Mammary epithelial cell (primary cell): ENCODE measurements at regions of chr3 and their contacts with region 1.

Region 1: GRCh38 chr3:64399205-64399800 is 174.0 kb upstream of the PRICKLE2 start:
- DNase-seq: peak; percentile 62
- H3K4me3 ChIP-seq: no peak overlapping the region
- H3K27ac ChIP-seq: no peak overlapping the region
- H3K4me1 ChIP-seq: no peaks in the 10 kb centered on the region
- H3K27me3 ChIP-seq: no peaks in the 10 kb centered on the region
- CTCF ChIP-seq: peak; percentile 82 to 90

Region 2: GRCh38 chr3:64023187-64023848 is 376.0 kb before region 1 on chr3 and contains the start of gene PSMD6:
- CTCF ChIA-PET with region 1: no interaction called
- dilution Hi-C with region 1: no loop called
- in situ Hi-C with region 1: no loop called
- intact Hi-C with region 1: loop called (anchors 2 kb)
- DNase-seq: peak; percentile 81
- H3K4me3 ChIP-seq: peak within 1 kb of the TSS; percentile 81 to 95 (median 85)
- H3K27ac ChIP-seq: peak within 1 kb of the TSS; percentile 90
- H3K4me1 ChIP-seq: peaks cover 10% of the 10 kb centered on the region
- H3K27me3 ChIP-seq: no peaks in the 10 kb centered on the region
- CTCF ChIP-seq: peak; percentile 96 to 100
- total RNA-seq, gene PSMD6: 70.7 to 85.9 TPM

Region 3: GRCh38 chr3:64224826-64225610 is 174.3 kb before region 1 on chr3 and contains the start of gene PRICKLE2:
- CTCF ChIA-PET with region 1: no interaction called
- dilution Hi-C with region 1: no loop called
- in situ Hi-C with region 1: no loop called
- intact Hi-C with region 1: loop called (anchors 1 kb)
- DNase-seq: peak; percentile 81
- H3K4me3 ChIP-seq: peak within 1 kb of the TSS in 2 of 3 experiments; percentile 7 to 25
- H3K27ac ChIP-seq: peak within 1 kb of the TSS; percentile 62
- H3K4me1 ChIP-seq: peaks cover 29% of the 10 kb centered on the region
- H3K27me3 ChIP-seq: no peaks in the 10 kb centered on the region
- CTCF ChIP-seq: peak; percentile 26 to 36
- total RNA-seq, gene PRICKLE2: 23.2 to 50.5 TPM

Region 4: GRCh38 chr3:64259636-64260035 is 139.7 kb before region 1 on chr3:
- CTCF ChIA-PET with region 1: no interaction called
- dilution Hi-C with region 1: no loop called
- in situ Hi-C with region 1: loop called in 1 of 2 experiments (anchors 10 kb)
- intact Hi-C with region 1: no loop called
- DNase-seq: no peak
- H3K4me3 ChIP-seq: no peak overlapping the region
- H3K27ac ChIP-seq: no peak overlapping the region
- H3K4me1 ChIP-seq: peaks cover 31% of the 10 kb centered on the region
- H3K27me3 ChIP-seq: no peaks in the 10 kb centered on the region
- CTCF ChIP-seq: no peak

Region 5: DNA sequence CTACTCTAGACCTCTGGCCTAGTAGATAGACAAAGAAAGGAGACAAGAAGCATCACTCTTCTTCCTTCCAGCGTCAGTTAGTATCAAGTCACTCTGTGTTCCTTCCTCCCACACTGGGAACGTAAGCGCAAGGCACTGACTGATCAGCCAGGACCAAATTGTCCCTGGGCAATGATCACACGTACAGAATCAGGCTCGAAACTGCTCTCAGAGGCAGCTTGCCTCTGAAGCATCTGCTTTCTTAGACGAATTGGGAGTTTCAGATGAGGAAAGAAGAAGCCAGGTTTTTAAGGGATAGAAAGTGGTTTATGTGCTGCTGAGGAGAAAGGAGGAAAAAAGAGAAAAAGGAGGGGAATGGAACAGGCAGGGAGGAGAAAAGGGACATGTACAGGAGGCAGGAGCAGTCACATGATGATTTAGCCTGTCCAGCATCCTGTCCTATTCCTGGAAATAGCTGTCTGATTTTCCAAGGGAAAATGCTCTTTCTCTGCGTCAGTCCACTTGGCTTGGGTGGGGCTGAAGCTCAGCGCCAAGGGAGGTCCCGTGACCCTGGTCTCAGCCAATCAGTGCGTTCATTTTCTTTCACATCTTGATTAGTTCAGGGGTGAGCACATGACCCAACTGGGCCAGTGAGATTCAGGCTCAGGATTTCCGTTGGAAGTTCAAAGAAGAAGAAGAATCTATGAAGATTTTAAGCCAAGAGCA is 72.1 kb before region 1 on chr3:
- CTCF ChIA-PET with region 1: no interaction called
- dilution Hi-C with region 1: loop called (anchors 5 kb)
- in situ Hi-C with region 1: no loop called
- intact Hi-C with region 1: loop called (anchors 1 kb)
- DNase-seq: no peak
- H3K4me3 ChIP-seq: no peak overlapping the region
- H3K27ac ChIP-seq: no peak overlapping the region
- H3K4me1 ChIP-seq: peaks cover 1% of the 10 kb centered on the region
- H3K27me3 ChIP-seq: no peaks in the 10 kb centered on the region
- CTCF ChIP-seq: no peak

Region 6: DNA sequence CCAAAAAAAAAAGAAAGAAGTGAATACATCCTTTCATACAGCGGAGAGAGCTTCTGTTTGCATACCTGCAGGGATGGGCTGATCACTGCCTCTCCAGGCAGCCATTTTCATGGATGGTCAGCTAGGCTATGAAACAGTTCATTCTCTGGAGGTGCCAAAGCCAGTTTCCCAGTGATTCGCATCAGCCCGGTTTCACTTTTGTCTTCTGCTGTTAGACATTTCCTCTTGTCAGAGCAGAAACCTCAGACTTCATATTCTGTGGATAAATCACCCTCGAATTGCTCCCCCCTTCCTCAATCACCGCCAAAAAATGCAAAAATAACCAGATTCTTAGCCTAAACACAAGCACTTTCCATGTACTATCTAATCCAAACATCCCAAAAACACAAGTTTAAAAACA is 62.9 kb after region 1 on chr3:
- CTCF ChIA-PET with region 1: no interaction called
- dilution Hi-C with region 1: no loop called
- in situ Hi-C with region 1: no loop called
- intact Hi-C with region 1: loop called (anchors 5 kb)
- DNase-seq: no peak
- H3K4me3 ChIP-seq: no peak overlapping the region
- H3K27ac ChIP-seq: no peak overlapping the region
- H3K4me1 ChIP-seq: peaks cover 2% of the 10 kb centered on the region
- H3K27me3 ChIP-seq: no peaks in the 10 kb centered on the region
- CTCF ChIP-seq: no peak